Endothelial cell of umbilical vein (primary cell): ENCODE measurements at regions of chr3 and their contacts with region 1.

Region 1: DNA sequence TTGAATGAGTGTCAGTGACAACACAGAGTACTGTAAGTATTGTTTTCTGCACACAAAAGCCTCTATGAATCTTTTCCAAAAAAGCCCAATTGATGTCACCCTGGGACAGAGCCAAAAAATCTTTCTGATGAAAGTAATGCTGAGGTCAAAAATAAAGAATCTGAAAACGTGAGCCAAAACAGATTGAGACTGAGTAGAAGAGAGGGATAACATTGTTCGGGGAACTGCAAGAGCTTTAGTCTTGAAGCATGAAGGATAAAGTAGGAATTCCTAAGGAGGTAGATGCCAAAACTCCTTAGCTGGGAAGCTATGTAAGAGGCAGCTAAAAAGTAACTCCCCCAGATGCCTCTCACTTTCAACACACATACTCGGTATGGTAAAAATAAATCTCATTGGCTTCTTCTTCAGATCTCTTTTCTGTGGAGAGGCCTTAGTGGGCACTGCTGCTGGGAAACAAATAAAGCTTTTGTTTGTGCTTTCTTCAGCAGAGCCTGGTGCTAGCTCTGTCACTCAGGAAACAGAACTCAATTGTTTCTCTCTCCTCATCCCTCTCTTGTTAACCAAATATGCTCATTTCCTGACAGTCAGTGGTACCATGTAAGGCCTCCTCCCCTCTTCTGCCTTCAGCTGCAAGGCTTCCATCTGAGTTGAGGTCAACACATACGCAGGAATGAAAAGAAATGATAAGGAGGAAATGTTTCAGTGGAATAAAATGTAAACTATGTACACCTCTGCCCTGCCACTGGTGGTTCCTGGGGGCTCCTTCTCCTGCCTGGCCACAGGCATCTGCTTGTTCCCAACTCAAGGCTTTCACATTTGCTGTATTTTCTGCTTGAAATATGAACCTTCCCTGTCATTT is 58.1 kb downstream of the CD200 start:
- DNase-seq: peak; percentile 89
- H3K4me3 ChIP-seq: no peak overlapping the region
- H3K27ac ChIP-seq: peak overlapping the region; percentile 98
- H3K4me1 ChIP-seq: peaks cover 44% of the 10 kb centered on the region
- H3K27me3 ChIP-seq: no peaks in the 10 kb centered on the region
- CTCF ChIP-seq: no peak
- POLR2A ChIP-seq: peak; percentile 68

Region 2: GRCh38 chr3:112327371-112327951 is 63.6 kb before region 1 on chr3:
- CTCF ChIA-PET with region 1: interaction called, 10 read pairs
- POLR2A ChIA-PET with region 1: interaction called, 3 read pairs
- dilution Hi-C with region 1: no loop called
- intact Hi-C with region 1: loop called (anchors 1 kb)
- DNase-seq: peak; percentile 79
- H3K4me3 ChIP-seq: no peak overlapping the region
- H3K27ac ChIP-seq: no peak overlapping the region
- H3K4me1 ChIP-seq: no peaks in the 10 kb centered on the region
- H3K27me3 ChIP-seq: peaks cover 0 to 2% of the 10 kb centered on the region in 2 experiments
- CTCF ChIP-seq: peak; percentile 34 to 53
- POLR2A ChIP-seq: no peak

Region 3: DNA sequence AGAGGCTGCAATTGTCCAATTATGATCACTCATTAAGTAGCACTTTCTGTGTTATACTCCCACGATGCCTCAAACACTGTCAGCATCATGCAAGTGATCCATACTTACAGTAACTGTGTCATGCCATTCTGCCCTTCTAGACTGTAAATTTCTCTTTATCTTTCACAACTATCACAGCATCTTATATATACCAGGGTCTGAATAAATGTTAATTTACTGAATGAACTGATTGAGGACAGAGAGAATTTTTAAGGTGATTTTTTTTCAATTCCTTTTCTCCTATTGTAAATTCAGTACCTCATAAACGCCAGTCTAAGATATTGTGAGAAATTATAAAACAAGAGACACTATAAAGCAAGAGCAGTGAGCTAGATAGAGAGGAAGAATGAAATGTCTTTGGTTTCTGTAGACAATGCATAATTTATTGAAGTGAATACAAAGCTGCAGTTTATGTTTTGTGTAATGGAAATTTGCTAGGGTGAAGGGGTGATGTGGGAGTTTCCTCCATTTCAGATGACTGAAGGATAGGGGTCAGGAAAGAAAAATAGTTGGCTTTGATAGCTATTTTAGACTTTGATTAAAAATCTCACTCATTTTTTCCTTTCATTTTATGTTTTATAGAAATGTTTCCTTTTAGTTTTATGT is 40.7 kb before region 1 on chr3:
- CTCF ChIA-PET with region 1: interaction called, 8 read pairs
- POLR2A ChIA-PET with region 1: interaction called, 4 read pairs
- dilution Hi-C with region 1: no loop called
- intact Hi-C with region 1: loop called (anchors 1 kb)
- DNase-seq: peak; percentile 87
- H3K4me3 ChIP-seq: no peak overlapping the region
- H3K27ac ChIP-seq: peak overlapping the region; percentile 16
- H3K4me1 ChIP-seq: peaks cover 38% of the 10 kb centered on the region
- H3K27me3 ChIP-seq: no peaks in the 10 kb centered on the region
- CTCF ChIP-seq: no peak
- POLR2A ChIP-seq: no peak

Region 4: GRCh38 chr3:112437146-112438022 is 46.4 kb after region 1 on chr3:
- CTCF ChIA-PET with region 1: interaction called, 8 read pairs
- POLR2A ChIA-PET with region 1: no interaction called
- dilution Hi-C with region 1: no loop called
- intact Hi-C with region 1: loop called (anchors 5 kb)
- DNase-seq: peak; percentile 33
- H3K4me3 ChIP-seq: no peak overlapping the region
- H3K27ac ChIP-seq: no peak overlapping the region
- H3K4me1 ChIP-seq: no peaks in the 10 kb centered on the region
- H3K27me3 ChIP-seq: no peaks in the 10 kb centered on the region
- CTCF ChIP-seq: peak; percentile 36 to 41
- POLR2A ChIP-seq: no peak

Region 5: DNA sequence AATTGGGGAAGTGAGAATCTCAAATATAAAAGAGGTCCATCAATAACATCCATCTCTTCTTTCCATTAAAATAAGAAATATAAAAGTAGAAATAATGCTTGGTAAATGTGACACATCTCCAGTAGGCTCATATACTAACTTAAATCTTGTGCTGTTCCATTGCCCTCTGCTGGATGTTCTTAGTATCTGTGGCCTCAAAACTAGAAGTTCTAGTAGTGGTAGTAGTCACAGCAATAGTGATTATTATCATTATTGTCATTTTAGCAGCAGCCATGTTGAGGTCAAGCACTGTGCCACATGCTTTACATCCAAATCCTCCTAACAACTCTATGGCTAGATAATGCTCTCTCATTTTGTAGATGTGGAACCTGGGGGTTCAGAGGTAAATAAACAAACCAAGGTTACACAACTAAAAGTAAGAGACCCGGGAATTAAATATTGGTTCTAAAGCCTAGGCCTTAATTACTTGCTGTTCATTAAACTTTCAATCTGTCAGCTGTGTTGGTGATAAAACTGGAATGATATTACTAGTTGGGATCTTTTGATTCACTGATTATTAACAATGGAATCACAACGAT is 128.5 kb after region 1 on chr3:
- CTCF ChIA-PET with region 1: no interaction called
- POLR2A ChIA-PET with region 1: no interaction called
- dilution Hi-C with region 1: no loop called
- intact Hi-C with region 1: loop called (anchors 2 kb)
- DNase-seq: peak; percentile 79
- H3K4me3 ChIP-seq: no peak overlapping the region
- H3K27ac ChIP-seq: no peak overlapping the region
- H3K4me1 ChIP-seq: no peaks in the 10 kb centered on the region
- H3K27me3 ChIP-seq: no peaks in the 10 kb centered on the region
- CTCF ChIP-seq: peak; percentile 45 to 52
- POLR2A ChIP-seq: no peak